ENCODE measurements at regions of chr7 and their contacts with region 1.

Region 1: GRCh38 chr7:93117852-93118530 is at the start of gene SAMD9:
- DNase-seq: peak in 33 of 35 experiments; percentile 22 to 86 (median 64)
- ATAC-seq: peak; percentile 99 to 100 (median 99)
- H3K4me3 ChIP-seq: peak within 1 kb of the TSS; percentile 49 to 55
- H3K4me3 Mint-ChIP-seq: peak within 1 kb of the TSS; percentile 74 to 92 (median 86)
- H3K27ac ChIP-seq: peak within 1 kb of the TSS; percentile 70
- H3K27ac Mint-ChIP-seq: peak within 1 kb of the TSS; percentile 88 to 97
- H3K4me1 ChIP-seq: peaks cover 13 to 22% of the 10 kb centered on the region in 2 experiments
- H3K4me1 Mint-ChIP-seq: peaks cover 46 to 54% (median 49%) of the 10 kb centered on the region in 3 donors
- H3K27me3 ChIP-seq: no peaks in the 10 kb centered on the region
- H3K27me3 Mint-ChIP-seq: no peaks in the 10 kb centered on the region
- total RNA-seq, gene SAMD9: 28.2 to 42.2 (median 38.1) TPM

Region 2: GRCh38 chr7:92590711-92591310 is 527.2 kb before region 1 on chr7:
- CTCF ChIA-PET with region 1: no interaction called
- POLR2A ChIA-PET with region 1: interaction called in 1 of 2 experiments, 10 read pairs
- DNase-seq: peak in 1 of 35 experiments; percentile 8
- ATAC-seq: no peak
- H3K4me3 ChIP-seq: peak overlapping the region; percentile 80 to 95
- H3K4me3 Mint-ChIP-seq: peak overlapping the region; percentile 90 to 95 (median 94)
- H3K27ac ChIP-seq: no peak overlapping the region
- H3K27ac Mint-ChIP-seq: no peak overlapping the region
- H3K4me1 ChIP-seq: peaks cover 21 to 22% of the 10 kb centered on the region in 2 experiments
- H3K4me1 Mint-ChIP-seq: peaks cover 36 to 49% (median 42%) of the 10 kb centered on the region in 3 donors
- H3K27me3 ChIP-seq: no peaks in the 10 kb centered on the region
- H3K27me3 Mint-ChIP-seq: peaks cover 0 to 3% of the 10 kb centered on the region in 2 donors

Region 3: DNA sequence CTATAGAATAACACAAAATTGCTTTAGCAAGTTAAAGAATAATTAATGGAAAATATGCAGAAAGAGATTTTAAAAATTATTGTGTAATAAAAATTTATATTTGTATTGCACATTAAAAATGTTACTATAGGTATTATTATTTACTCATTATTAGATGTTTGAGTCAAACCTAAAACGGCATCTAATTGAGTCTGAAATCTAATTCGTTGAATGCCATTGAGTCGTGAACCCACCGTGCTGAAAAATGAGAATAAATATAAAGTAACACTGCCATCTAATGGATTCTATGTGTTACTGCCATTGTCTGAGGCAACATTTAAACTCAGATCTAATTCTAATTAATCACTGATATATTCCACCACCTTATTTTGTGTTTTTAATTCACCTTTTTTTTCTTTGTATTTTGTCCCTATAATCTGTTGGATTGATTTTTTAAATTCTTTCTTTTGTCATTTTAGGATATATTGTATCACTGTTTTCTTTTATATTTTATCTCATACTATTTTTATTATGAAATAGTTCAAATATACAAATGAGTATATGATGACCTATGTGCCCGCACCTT is 62.4 kb before region 1 on chr7:
- CTCF ChIA-PET with region 1: no interaction called
- POLR2A ChIA-PET with region 1: no interaction called
- DNase-seq: peak in 1 of 35 experiments; percentile 62
- ATAC-seq: peak; percentile 49 to 70 (median 67)
- H3K4me3 ChIP-seq: no peak overlapping the region
- H3K4me3 Mint-ChIP-seq: no peak overlapping the region
- H3K27ac ChIP-seq: no peak overlapping the region
- H3K27ac Mint-ChIP-seq: no peak overlapping the region
- H3K4me1 ChIP-seq: peaks cover 0 to 3% of the 10 kb centered on the region in 2 experiments
- H3K4me1 Mint-ChIP-seq: peaks cover 0 to 8% (median 6%) of the 10 kb centered on the region in 3 donors
- H3K27me3 ChIP-seq: peaks cover 0 to 4% of the 10 kb centered on the region in 2 experiments
- H3K27me3 Mint-ChIP-seq: no peaks in the 10 kb centered on the region

Region 4: GRCh38 chr7:93194386-93194785 is 76.4 kb after region 1 on chr7:
- CTCF ChIA-PET with region 1: no interaction called
- POLR2A ChIA-PET with region 1: no interaction called
- DNase-seq: no peak
- ATAC-seq: no peak
- H3K4me3 ChIP-seq: no peak overlapping the region
- H3K4me3 Mint-ChIP-seq: no peak overlapping the region
- H3K27ac ChIP-seq: no peak overlapping the region
- H3K27ac Mint-ChIP-seq: no peak overlapping the region
- H3K4me1 ChIP-seq: no peaks in the 10 kb centered on the region
- H3K4me1 Mint-ChIP-seq: no peaks in the 10 kb centered on the region
- H3K27me3 ChIP-seq: no peaks in the 10 kb centered on the region
- H3K27me3 Mint-ChIP-seq: peaks cover 31 to 39% of the 10 kb centered on the region in 2 donors

Measured in T-cell (primary cell).